AG04449 (cell line): ENCODE measurements at regions of chr12 and their contacts with region 1.

Region 1: DNA sequence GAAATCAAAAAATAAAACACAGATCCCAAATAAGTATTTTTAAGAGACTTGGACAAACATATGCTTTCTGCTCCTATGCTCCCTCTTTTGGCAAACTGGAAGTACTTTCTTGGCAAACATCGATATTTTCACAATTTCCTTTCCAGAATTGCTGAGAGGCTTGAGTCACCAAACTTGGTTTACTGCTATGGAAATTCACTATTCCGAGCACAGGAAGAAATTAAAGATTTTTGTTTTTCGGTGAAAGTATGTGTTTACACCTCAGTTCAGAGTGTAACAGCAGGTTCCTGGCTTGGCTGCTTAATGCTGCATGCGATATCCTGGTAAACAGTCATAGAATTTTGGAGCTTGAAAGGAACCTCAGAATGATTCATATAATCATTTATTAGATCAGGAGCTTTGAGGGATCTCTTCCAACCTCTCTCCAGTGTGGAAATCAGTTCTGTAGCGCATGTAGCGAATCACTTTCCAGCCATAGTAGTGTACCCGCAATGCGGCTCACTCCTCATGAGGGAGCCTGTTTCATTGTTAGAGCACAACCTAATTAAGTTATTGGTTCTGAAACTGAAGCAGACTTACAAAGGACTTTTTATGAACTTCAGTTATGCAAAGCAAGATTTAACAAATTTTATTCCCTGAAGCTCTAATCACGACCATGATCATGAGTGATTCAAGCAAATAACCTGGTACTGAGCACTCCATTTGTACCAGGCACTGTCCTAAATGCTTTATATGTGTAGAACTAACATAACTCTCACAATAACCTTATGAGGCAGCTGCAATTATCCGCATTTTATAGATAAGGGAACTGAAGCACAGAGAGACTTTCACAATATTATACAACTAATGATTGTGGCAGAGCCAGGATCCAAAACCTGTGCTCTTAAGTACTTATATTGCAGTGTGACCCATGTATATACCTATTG is 56.4 kb upstream of the ATP2A2 start:
- DNase-seq: peak; percentile 54
- H3K4me3 ChIP-seq: no peak overlapping the region
- CTCF ChIP-seq: peak; percentile 69

Region 2: GRCh38 chr12:110073049-110073831 is 151.4 kb before region 1 on chr12:
- CTCF ChIA-PET with region 1: no interaction called
- POLR2A ChIA-PET with region 1: no interaction called
- DNase-seq: no peak
- H3K4me3 ChIP-seq: peak overlapping the region; percentile 44
- CTCF ChIP-seq: no peak

Region 3: DNA sequence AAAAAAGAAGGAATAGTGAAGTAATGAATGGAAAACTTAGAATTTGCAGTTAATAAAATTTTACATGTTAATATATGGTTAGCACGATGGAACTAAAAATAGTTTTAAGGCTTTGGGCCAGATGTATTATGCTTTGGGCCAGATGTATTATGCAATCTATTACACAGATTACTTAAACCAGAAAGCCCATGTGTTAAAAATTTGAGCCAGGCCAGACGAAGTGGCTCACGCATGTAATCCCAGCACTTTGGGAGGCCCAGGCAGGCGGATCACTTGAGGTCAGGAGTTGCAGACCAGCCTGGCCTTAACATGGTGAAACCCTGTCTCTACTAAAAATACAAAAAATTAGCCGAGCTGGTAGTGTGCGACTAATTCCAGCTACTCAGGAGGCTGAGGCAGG is 83.3 kb before region 1 on chr12:
- CTCF ChIA-PET with region 1: no interaction called
- POLR2A ChIA-PET with region 1: no interaction called
- DNase-seq: peak; percentile 41
- H3K4me3 ChIP-seq: no peak overlapping the region
- CTCF ChIP-seq: no peak

Region 4: GRCh38 chr12:110234755-110235154 is 10.1 kb after region 1 on chr12:
- CTCF ChIA-PET with region 1: interaction called, 16 read pairs
- POLR2A ChIA-PET with region 1: no interaction called
- DNase-seq: no peak
- H3K4me3 ChIP-seq: no peak overlapping the region
- CTCF ChIP-seq: no peak

Region 5: DNA sequence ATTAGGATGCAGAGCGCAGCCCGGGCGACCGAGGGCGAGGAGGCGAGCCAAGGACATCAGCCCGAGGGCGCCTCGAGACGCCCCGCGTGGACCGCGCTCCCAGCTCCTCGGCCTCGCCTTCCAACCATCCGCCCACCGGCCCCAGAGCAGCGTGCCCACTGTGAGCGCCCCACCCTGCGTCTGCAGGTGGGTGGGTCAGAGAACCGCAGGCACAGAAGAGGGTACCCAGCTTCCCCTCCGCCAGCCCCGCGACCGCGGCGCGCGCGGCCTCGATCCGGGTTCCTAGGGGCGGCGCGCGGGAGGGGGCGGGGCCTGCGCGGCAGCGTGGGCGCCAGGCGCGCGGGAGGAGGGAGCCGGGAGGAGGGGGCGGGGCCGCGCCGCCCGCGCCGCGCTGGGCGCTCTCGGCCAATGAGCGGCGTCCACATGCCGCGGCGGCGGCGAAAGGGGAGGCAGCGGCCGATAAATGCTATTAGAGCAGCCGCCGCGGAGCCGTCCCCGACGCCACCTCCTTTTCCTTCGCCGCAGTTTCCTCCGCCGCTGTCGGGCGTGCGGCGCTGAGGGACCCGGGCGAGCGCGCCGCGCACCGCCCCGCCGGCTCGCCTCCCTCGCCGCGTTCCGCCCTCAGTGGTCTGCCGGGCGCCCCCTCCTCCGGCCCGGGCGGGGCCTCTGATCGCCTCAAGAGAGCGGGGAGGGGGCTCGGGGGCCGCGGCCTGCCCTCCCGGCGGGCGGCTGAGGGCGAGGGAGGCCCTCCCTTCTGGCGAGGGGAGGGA is 56.3 kb after region 1 on chr12 and contains the start of gene ATP2A2:
- CTCF ChIA-PET with region 1: interaction called, 11 read pairs
- POLR2A ChIA-PET with region 1: no interaction called
- DNase-seq: no peak
- H3K4me3 ChIP-seq: peak within 1 kb of the TSS; percentile 95
- CTCF ChIP-seq: no peak

Region 6: DNA sequence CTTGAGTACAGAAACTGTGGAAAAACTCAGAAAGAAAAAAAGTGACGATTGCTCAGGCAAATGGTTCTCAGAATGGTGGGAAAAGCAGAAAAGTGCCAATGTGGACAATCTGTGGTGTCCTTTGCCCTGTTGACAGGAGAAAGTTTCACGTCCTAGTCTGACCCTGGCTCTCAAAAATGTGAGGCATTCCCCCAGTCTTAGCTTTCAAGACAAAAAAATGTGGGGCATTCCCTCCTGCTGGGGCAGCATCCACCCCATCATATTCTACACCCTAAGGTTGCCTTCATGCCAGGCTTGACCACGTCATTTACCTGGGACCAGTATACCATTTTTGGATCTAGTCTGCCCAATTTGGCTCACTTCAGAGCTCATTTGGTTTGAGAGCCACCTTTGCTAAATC is 199.6 kb after region 1 on chr12:
- CTCF ChIA-PET with region 1: no interaction called
- POLR2A ChIA-PET with region 1: no interaction called
- DNase-seq: no peak
- H3K4me3 ChIP-seq: no peak overlapping the region
- CTCF ChIP-seq: no peak

Region 7: GRCh38 chr12:110444455-110444854 is 219.8 kb after region 1 on chr12:
- CTCF ChIA-PET with region 1: no interaction called
- POLR2A ChIA-PET with region 1: no interaction called
- DNase-seq: no peak
- H3K4me3 ChIP-seq: no peak overlapping the region
- CTCF ChIP-seq: no peak